ENCODE measurements at regions of chr18 and their contacts with region 1.

Region 1: GRCh38 chr18:75723521-75724340 is 296.2 kb upstream of the SMIM21 start:
- DNase-seq: no peak
- ATAC-seq: no peak
- H3K4me3 ChIP-seq: no peak overlapping the region
- H3K27ac ChIP-seq: no peak overlapping the region
- H3K4me1 ChIP-seq: no peaks in the 10 kb centered on the region
- H3K27me3 ChIP-seq: no peaks in the 10 kb centered on the region
- CTCF ChIP-seq: no peak
- POLR2A ChIP-seq: no peak

Region 2: GRCh38 chr18:75810961-75811551 is 87.3 kb after region 1 on chr18:
- in situ Hi-C with region 1: loop called in 1 of 4 experiments (anchors 25 kb)
- intact Hi-C with region 1: no loop called
- DNase-seq: no peak
- ATAC-seq: no peak
- H3K4me3 ChIP-seq: no peak overlapping the region
- H3K27ac ChIP-seq: no peak overlapping the region
- H3K4me1 ChIP-seq: peaks cover 7 to 9% of the 10 kb centered on the region in 2 donors
- H3K27me3 ChIP-seq: peaks cover 0 to 8% (median 6%) of the 10 kb centered on the region in 3 donors
- CTCF ChIP-seq: no peak
- POLR2A ChIP-seq: no peak